Activated CD4-positive, alpha-beta memory T cell treated with anti-CD3 and anti-CD28 coated beads for 36 hours (primary cell): ENCODE measurements at regions of chr2 and their contacts with region 1.

Region 1: DNA sequence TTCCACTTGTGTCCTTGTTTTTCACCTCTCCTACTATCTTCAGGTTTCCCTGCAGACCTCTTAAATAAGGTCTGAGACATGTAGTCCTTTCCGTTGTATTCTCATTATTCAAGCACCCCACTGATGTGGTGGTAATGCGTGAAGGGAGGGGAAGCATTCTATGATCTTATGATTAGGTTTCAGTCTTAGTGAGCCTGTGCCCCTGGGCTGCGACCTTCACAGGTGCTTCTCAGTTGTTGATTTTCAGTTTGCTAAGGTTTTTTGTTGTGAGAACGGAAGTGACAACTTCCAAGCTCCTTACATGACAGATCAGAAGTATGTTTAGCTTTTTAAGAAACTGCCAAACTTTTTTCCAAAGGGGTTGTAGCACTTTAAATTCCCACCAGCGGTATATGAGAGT is 41.3 kb downstream of the VPS54 start:
- DNase-seq: peak; percentile 54
- H3K4me3 Mint-ChIP-seq: no peak overlapping the region
- H3K27ac Mint-ChIP-seq: peak overlapping the region; percentile 16
- H3K4me1 Mint-ChIP-seq: peaks cover 23% of the 10 kb centered on the region
- H3K27me3 Mint-ChIP-seq: no peaks in the 10 kb centered on the region

Region 2: GRCh38 chr2:63950414-63950813 is 27.5 kb before region 1 on chr2:
- CTCF ChIA-PET with region 1: no interaction called
- POLR2A ChIA-PET with region 1: no interaction called
- intact Hi-C with region 1: no loop called
- DNase-seq: no peak
- H3K4me3 Mint-ChIP-seq: no peak overlapping the region
- H3K27ac Mint-ChIP-seq: no peak overlapping the region
- H3K4me1 Mint-ChIP-seq: no peaks in the 10 kb centered on the region
- H3K27me3 Mint-ChIP-seq: no peaks in the 10 kb centered on the region

Region 3: GRCh38 chr2:64018923-64019718 is 41.2 kb after region 1 on chr2 and contains the start of gene VPS54:
- CTCF ChIA-PET with region 1: no interaction called
- POLR2A ChIA-PET with region 1: no interaction called
- intact Hi-C with region 1: loop called (anchors 5 kb)
- DNase-seq: peak; percentile 63
- H3K4me3 Mint-ChIP-seq: peak within 1 kb of the TSS; percentile 98
- H3K27ac Mint-ChIP-seq: peak within 1 kb of the TSS; percentile 93
- H3K4me1 Mint-ChIP-seq: peaks cover 41% of the 10 kb centered on the region
- H3K27me3 Mint-ChIP-seq: no peaks in the 10 kb centered on the region
- total RNA-seq, gene VPS54: 12.5 to 12.8 TPM